Transverse colon (tissue), 4 donors: ENCODE measurements at regions of chr17 and their contacts with region 1.

Region 1: DNA sequence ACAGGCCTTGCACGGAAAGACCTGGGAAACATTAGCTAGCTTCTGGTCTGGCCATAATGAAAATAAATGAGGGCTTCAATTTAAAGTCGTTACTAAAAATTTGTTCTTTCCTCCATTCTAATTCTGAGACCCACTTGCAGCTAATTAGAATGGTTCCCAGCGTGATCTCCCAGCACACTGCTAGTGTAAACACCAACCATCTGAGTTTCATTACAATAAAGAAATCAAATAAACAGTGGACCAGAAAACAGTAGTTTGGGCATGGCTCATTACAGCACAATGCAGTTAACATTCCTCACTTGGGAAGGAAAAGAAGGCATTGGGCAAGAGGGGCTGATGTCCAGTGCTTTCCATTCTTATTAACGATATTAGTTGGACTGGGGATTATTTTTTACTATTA is 410.9 kb upstream of the SOX9 start:
- DNase-seq: no peak
- H3K4me3 ChIP-seq: no peak overlapping the region
- H3K27ac ChIP-seq: no peak overlapping the region
- H3K4me1 ChIP-seq: no peaks in the 10 kb centered on the region
- H3K27me3 ChIP-seq: no peaks in the 10 kb centered on the region
- CTCF ChIP-seq: no peak
- EP300 ChIP-seq: no peak
- POLR2A ChIP-seq: no peak

Region 2: DNA sequence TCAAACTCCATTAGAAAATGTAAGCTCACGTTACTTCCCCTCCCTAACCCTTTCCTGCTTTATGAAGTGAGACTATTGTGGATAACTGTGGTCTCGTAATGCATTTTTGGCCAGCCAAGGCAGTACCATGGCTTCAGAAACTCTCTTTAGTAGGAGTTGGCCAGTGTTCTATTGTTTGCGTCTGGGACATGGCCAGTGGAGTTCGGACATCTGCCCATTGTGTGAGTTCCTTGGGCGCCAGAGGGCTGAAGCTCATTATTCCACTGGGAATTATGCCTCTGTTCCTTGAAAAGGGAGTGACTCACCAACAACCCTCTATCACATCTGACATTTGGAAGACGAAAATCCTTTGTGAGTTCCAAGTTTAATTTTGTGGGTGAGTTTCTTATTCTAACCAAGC is 91.4 kb after region 1 on chr17:
- in situ Hi-C with region 1: loop called in 1 of 4 experiments (anchors 25 kb)
- intact Hi-C with region 1: no loop called
- DNase-seq: no peak
- H3K4me3 ChIP-seq: no peak overlapping the region
- H3K27ac ChIP-seq: no peak overlapping the region
- H3K4me1 ChIP-seq: no peaks in the 10 kb centered on the region
- H3K27me3 ChIP-seq: no peaks in the 10 kb centered on the region
- CTCF ChIP-seq: no peak
- EP300 ChIP-seq: no peak
- POLR2A ChIP-seq: no peak